Head of caudate nucleus (tissue), 42 donors: ENCODE measurements at regions of chr14 and their contacts with region 1.

Region 1: DNA sequence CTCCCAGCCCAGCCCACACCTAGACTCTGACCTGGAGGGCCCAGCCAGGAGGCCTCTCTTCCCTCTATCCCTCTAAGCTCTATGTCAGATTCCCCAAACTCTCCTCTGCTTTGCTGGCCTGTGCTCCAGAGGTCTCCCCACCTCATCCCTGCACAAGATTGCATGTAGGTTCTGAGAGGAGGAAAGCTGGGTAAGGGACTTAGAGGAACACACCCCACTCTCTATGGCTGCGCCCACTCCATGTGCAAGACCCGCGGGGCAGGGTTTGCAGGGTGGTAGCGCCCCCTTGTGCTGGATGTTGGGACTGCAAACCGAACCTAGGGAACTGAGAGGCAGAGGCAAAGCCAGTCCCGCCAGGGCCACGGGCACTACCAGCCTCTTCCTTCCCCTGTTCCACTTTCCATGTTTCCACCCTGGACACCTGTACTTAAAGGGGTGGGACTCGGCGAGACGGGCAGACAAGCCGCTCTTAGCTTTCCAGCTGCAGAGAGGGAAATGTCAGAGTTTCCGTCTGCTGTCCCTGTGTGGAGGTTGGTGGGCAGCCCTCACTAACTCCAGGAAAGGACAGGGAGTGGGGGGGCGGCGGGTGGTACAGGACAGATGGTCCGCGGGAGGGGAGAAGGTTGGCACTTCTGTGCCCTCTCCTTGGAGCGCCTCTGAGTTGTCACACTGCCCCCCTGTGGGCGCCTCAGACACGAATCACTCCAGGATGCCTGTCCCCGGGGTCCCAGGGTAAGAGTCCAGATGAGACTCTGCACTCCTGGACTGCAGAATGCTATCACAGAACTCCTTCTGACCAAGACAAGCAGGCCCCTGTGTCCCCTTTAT is 16.8 kb downstream of the MMP14 start:
- DNase-seq: peak; percentile 69 to 97 (median 90)

Region 2: GRCh38 chr14:22589096-22589839 is 263.9 kb before region 1 on chr14 and contains the start of gene DAD1:
- intact Hi-C with region 1: loop called (anchors 10 kb)
- DNase-seq: peak; percentile 91 to 98 (median 96)

Region 3: GRCh38 chr14:22822571-22823098 is 30.5 kb before region 1 on chr14:
- intact Hi-C with region 1: loop called (anchors 2 kb)
- DNase-seq: peak; percentile 48 to 88 (median 74)